Prostate gland (tissue), 2 donors: ENCODE measurements at regions of chr14 and their contacts with region 1.

Region 1: DNA sequence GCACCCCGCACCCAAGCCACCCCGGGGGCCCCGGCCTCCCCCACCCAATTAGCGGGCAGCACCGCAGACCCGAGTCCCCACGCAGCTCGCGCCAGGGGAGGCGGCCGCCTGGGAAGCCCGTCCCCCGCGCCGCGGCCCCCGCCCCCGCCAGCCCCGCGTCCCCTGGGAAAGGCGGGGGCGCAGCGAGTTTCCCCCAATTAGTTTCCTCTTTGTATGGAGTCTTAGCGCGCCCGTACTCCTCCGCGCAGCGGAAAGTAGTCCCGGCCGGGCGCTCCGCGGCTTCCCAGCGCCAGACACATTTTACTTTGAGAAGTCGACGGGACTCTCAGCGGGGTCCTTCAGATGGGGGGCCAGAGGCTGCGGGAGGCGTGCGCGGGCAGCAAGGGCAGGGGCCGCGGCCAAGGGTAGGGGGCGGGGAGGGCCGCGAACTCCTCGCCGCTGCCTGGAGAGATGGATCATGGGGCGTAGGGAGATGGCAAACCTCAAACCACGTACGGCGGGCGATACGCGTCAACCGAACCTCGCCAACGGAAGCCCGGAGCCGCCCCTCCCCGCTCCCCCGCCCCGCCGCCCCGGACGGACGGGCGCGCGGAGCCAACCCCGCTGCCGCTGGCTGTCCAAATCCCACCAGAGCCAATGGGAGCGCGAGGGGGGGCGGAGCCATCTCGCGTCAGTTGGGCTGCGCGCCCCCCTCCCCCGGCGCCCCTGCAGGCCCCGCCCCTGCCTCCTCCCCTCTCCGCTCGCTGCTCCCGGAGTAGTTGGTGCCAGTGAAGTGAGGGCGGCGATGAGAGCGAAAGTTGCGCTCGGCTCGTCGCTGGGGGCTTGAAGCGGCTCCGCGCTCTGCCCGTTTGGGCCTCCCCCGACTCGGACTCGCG is at the start of gene RCOR1:
- DNase-seq: peak; percentile 99
- H3K4me3 ChIP-seq: peak within 1 kb of the TSS; percentile 61 to 74
- H3K27ac ChIP-seq: peak within 1 kb of the TSS; percentile 93 to 96
- H3K4me1 ChIP-seq: no peaks in the 10 kb centered on the region
- H3K27me3 ChIP-seq: no peaks in the 10 kb centered on the region
- CTCF ChIP-seq: no peak
- POLR2A ChIP-seq: peak; percentile 84
- total RNA-seq, gene RCOR1: 14.4 to 26.6 TPM

Region 2: GRCh38 chr14:102344485-102344884 is 247.6 kb before region 1 on chr14:
- intact Hi-C with region 1: no loop called
- DNase-seq: no peak
- H3K4me3 ChIP-seq: no peak overlapping the region
- H3K27ac ChIP-seq: no peak overlapping the region
- H3K4me1 ChIP-seq: no peaks in the 10 kb centered on the region
- H3K27me3 ChIP-seq: no peaks in the 10 kb centered on the region
- CTCF ChIP-seq: no peak
- POLR2A ChIP-seq: no peak

Region 3: GRCh38 chr14:102524466-102525218 is 67.5 kb before region 1 on chr14:
- intact Hi-C with region 1: loop called (anchors 5 kb)
- DNase-seq: peak; percentile 98
- H3K4me3 ChIP-seq: peak overlapping the region; percentile 57 to 61
- H3K27ac ChIP-seq: peak overlapping the region; percentile 84 to 85
- H3K4me1 ChIP-seq: no peaks in the 10 kb centered on the region
- H3K27me3 ChIP-seq: no peaks in the 10 kb centered on the region
- CTCF ChIP-seq: peak; percentile 99
- POLR2A ChIP-seq: peak; percentile 64